HEK293 (cell line): ENCODE measurements at regions of chrX and their contacts with region 1.

Region 1: DNA sequence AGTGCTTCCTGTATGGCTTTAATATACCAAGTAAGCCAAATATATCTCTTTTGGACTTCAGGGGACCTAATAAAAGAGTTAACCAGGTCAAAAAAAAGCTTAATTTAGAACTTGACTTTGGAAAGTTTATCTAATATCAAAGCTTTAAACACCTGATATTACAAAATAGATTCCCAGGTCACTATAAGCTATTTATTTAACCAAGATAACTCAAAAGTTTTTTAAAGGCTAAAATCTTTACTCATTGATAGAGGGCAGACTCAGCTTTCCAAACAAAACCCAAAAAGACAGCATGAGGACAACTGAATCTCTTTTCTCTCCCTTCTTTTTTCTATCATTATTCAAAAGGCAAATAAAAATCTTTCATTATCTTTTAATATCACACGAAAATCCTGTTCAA is 19.5 kb downstream of the NUDT11 start:
- H3K4me3 ChIP-seq: no peak overlapping the region
- H3K27ac ChIP-seq: no peak overlapping the region
- H3K4me1 ChIP-seq: no peaks in the 10 kb centered on the region
- CTCF ChIP-seq: no peak

Region 2: DNA sequence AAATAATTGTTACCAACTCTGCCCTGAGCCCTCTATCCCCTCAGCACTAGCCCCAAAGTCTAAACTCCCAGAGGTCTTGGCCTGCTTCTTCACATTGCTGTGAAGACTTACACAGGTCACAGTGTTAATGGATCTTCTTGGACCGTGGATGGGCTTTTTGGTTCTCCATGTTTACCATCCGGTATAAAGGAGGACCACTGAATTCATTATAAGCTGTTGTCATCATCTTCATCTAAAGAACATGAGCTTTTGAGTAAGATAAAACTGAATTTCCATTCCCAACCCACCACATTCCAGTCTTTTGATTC is 11.0 kb after region 1 on chrX:
- CTCF ChIA-PET with region 1: interaction called, 22 read pairs
- POLR2A ChIA-PET with region 1: no interaction called
- H3K4me3 ChIP-seq: no peak overlapping the region
- H3K27ac ChIP-seq: no peak overlapping the region
- H3K4me1 ChIP-seq: no peaks in the 10 kb centered on the region
- CTCF ChIP-seq: no peak

Region 3: DNA sequence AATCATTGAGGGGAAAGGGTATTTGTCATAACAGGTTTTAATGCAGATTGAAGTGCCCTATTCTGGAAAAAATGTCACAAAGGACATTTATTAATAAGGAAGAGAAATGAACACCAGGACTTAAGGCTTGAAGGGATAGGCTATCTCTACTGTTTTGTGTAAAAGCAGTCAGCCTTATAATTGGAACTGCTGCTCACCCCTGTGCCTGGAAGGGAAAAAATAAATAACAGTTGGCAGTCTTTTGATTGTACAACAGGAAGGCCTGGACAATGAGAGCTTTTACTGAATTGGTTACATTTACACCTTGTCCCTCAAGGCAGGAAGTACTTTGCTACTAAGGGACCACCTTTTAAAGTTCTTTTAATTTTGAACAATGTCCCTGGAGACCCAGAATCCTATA is 689.9 kb after region 1 on chrX:
- CTCF ChIA-PET with region 1: no interaction called
- POLR2A ChIA-PET with region 1: no interaction called
- H3K4me3 ChIP-seq: no peak overlapping the region
- H3K27ac ChIP-seq: no peak overlapping the region
- H3K4me1 ChIP-seq: no peaks in the 10 kb centered on the region
- CTCF ChIP-seq: no peak